Right ventricle myocardium inferior (tissue), 1 donor: ENCODE measurements at regions of chr6 and their contacts with region 1.

Region 1: GRCh38 chr6:28981833-28982475 is 23.2 kb downstream of the ZNF311 start:
- DNase-seq: peak; percentile 85
- ATAC-seq: peak; percentile 86

Region 2: GRCh38 chr6:28863604-28864320 is 118.2 kb before region 1 on chr6:
- intact Hi-C with region 1: loop called (anchors 10 kb)
- DNase-seq: peak; percentile 74
- ATAC-seq: peak; percentile 88

Region 3: DNA sequence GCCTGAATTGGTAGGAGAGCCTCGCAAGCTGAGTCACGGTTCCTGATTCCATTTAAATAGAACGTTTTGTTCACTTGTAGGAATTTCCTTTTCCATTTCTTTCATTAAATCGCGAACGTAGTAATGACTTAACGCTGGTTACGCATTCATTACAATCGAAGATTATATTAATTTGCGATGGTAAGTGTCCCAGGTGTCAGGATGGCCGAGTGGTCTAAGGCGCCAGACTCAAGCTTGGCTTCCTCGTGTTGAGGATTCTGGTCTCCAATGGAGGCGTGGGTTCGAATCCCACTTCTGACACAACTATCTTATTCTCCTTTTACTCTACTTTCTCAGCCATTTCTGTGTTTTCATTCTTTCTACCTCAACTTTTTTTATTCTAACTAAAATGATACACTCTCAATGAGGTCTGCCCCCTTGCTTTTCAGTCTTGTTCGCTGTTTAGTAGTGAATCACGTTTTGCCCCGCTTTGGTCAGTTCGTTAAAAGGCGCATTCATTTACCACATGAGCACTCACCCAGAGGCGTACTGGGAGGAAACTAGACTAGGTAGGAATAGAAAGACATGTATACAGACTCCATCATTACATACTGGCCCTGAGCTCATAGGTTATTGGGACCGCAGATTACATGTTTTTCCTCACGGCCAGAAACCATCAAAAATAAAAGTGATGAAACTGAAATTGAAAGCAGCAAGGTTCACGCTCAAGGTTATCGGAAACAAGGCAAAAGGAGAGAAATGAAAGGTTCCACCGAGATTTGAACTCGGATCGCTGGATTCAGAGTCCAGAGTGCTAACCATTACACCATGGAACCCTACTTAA is 40.9 kb before region 1 on chr6:
- intact Hi-C with region 1: loop called (anchors 1 kb)
- DNase-seq: no peak
- ATAC-seq: peak; percentile 86

Region 4: GRCh38 chr6:28996844-28997510 is 15.0 kb after region 1 on chr6:
- intact Hi-C with region 1: no loop called
- DNase-seq: no peak
- ATAC-seq: no peak